Activated T-helper 1 cell treated with anti-CD3 and anti-CD28 coated beads, Interleukin-12 subunit alpha, Interleukin-12 subunit beta, Interleukin-2, Interleukin-4 antibody, amounts not matched to agents 30 ng/mL and 10 ng/mL and 1 ng/mL, durations not matched to agents 14 hours and 24 hours and 36 hours (primary cell): ENCODE measurements at regions of chr1 and their contacts with region 1.

Region 1: DNA sequence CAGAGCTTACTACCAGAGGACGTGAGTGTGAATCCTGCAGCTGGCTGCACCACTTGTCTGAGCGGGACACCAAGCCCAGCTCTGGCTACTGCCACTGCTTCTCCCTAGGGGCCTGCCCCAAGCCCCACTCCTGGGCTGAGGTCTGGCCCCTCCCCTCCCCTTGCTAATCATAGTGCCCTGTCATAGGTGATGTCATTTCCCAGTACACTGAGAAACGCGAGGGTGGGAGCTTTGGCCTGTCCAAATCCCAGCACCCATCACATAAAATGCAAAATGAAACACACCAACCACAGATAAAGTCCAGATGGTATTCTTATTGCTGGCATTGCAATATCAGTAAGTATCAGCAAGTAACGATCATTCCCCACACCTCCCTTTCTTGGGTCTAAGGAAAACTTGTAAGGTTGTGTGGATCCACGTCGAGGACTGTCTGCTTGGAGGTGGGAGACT is 77.7 kb downstream of the TOMM20 start:
- DNase-seq: no peak
- H3K4me3 Mint-ChIP-seq: no peak overlapping the region
- H3K27ac Mint-ChIP-seq: peak overlapping the region; percentile 78
- H3K4me1 Mint-ChIP-seq: peaks cover 49% of the 10 kb centered on the region
- H3K27me3 Mint-ChIP-seq: no peaks in the 10 kb centered on the region

Region 2: DNA sequence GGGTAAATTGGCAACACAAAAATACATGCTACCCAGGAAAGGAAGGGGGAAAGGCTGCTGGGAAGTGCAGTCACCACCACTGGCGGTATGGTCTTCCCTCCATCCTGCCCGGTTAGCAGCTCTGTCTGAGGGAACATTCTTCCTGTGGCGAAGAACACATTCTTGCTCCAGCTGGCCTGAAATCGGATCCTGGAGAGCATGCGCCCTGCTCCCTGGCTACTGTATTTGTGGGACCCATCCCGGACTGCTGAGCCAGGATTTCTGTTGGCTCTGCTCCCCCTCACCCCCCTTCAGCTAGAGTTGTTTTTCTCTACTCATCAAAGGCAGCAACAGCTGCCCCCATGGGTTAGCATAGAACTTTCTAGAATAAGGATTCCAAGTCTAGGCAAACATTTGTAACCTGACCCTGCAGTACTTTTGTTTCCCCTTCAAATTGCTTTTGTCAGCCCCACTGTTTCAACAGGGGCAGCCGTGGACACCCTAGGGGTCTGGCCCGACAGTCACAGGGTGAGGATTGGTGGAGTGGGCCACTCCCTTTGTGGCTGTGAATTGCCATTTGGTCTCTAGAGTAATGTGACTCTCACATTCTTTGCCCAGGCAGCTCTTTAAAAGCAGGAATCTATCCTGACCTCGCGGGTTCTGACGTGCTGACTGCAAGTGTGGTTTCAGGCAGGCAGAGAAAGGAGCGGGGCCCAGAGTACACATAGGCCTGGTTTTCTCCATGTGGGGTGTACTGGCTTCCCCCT is 80.0 kb before region 1 on chr1:
- intact Hi-C with region 1: loop called (anchors 2 kb)
- DNase-seq: no peak
- H3K4me3 Mint-ChIP-seq: peak overlapping the region; percentile 32
- H3K27ac Mint-ChIP-seq: peak overlapping the region; percentile 84
- H3K4me1 Mint-ChIP-seq: peaks cover 72% of the 10 kb centered on the region
- H3K27me3 Mint-ChIP-seq: no peaks in the 10 kb centered on the region

Region 3: GRCh38 chr1:235030919-235031596 is 19.9 kb before region 1 on chr1:
- intact Hi-C with region 1: no loop called
- DNase-seq: no peak
- H3K4me3 Mint-ChIP-seq: no peak overlapping the region
- H3K27ac Mint-ChIP-seq: peak overlapping the region; percentile 34
- H3K4me1 Mint-ChIP-seq: peaks cover 9% of the 10 kb centered on the region
- H3K27me3 Mint-ChIP-seq: no peaks in the 10 kb centered on the region

Region 4: GRCh38 chr1:235067263-235068172 is 16.6 kb after region 1 on chr1:
- intact Hi-C with region 1: loop called (anchors 2 kb)
- DNase-seq: no peak
- H3K4me3 Mint-ChIP-seq: no peak overlapping the region
- H3K27ac Mint-ChIP-seq: peak overlapping the region; percentile 59
- H3K4me1 Mint-ChIP-seq: peaks cover 53% of the 10 kb centered on the region
- H3K27me3 Mint-ChIP-seq: no peaks in the 10 kb centered on the region